Left cardiac atrium (tissue), 4 donors: ENCODE measurements at regions of chr2 and their contacts with region 1.

Region 1: GRCh38 chr2:160210599-160211138 is 10.6 kb upstream of the ITGB6 start:
- DNase-seq: peak; percentile 65
- ATAC-seq: peak in 1 of 2 donors; percentile 36

Region 2: DNA sequence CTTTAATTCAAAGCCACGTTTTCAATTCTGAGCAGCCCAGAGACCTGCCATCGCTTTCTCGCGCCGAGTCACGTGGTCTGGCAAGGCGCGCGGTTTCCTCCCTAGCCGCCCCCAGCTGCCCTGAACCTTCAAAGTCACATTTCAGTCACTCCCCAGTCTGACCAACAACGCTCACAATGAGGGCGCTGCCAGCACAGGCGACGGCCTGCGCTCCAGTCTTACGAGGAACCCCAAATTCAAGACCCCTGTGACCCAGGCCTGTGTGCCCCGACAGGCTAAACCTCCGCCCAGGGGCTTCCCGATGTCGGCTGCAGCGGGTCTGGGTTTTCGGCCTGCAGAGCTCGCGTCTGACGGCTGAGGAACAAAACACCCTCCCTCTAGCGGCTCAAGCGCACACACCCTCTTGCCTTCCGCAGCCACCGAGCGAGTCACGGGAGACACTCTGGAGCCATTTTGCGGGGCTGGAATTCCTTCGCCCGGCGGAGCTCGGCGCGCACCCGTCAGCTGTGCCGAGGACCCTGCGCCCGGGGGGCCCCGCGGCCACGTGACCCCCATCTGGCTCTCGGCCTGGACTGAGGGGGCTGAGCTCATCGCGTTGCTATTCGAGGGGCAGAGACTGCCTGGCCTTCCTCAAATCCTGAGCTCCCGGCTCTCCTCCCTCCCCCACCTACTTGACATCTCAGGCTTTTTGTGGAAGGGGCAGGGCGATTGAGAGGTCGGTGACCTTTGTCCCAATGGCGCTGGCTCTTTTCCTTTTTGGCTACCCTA is 59.3 kb after region 1 on chr2:
- intact Hi-C with region 1: loop called in 1 of 2 experiments (anchors 5 kb)
- DNase-seq: peak; percentile 90
- ATAC-seq: peak; percentile 91 to 92